ENCODE measurements at regions of chr15 and their contacts with region 1.

Region 1: DNA sequence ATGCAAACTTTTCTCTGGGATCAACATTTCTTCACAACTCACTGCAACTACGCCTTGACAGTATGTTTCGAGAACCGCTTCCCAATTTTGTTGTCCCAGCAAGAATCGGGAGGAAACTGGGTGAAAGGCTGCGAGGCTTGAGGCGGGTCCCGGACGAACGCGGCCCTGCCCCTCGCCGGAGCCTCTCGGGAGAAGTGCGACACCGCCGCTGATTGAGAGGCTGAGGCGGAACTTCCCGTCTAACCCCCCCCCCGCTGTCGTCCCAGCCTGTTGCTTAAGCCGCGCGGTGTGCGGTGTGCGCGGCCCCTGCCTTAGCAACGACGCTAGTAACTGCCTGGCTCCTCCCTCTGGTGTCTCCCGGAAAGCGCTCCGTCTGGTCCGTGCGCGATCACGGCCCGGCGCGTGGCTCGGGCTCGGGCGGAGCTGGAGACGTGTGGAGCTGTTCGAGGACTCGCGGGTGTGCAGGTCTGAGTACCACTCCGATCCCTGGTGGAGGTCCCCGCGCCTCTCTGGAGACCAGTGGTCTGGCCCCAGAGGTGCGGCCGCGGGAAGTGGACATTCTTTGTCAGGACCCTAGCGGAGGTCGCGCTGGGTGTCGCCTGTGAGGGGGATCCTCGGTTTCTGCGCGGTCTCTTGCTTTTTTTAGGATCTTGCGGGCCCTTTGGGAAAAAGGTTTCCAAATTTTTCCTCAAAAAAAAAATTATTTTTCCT is at the starts of genes DTWD1 and FAM227B:
- DNase-seq: peak; percentile 93
- H3K4me3 Mint-ChIP-seq: peak within 1 kb of the TSS; percentile 85
- H3K27ac Mint-ChIP-seq: peak within 1 kb of the TSS; percentile 88
- H3K4me1 Mint-ChIP-seq: peaks cover 40% of the 10 kb centered on the region
- H3K27me3 Mint-ChIP-seq: no peaks in the 10 kb centered on the region
- total RNA-seq, gene DTWD1: 21.1 and 26.5 TPM in 2 replicates
- total RNA-seq, gene FAM227B: 2.3 and 2.9 TPM in 2 replicates

Region 2: DNA sequence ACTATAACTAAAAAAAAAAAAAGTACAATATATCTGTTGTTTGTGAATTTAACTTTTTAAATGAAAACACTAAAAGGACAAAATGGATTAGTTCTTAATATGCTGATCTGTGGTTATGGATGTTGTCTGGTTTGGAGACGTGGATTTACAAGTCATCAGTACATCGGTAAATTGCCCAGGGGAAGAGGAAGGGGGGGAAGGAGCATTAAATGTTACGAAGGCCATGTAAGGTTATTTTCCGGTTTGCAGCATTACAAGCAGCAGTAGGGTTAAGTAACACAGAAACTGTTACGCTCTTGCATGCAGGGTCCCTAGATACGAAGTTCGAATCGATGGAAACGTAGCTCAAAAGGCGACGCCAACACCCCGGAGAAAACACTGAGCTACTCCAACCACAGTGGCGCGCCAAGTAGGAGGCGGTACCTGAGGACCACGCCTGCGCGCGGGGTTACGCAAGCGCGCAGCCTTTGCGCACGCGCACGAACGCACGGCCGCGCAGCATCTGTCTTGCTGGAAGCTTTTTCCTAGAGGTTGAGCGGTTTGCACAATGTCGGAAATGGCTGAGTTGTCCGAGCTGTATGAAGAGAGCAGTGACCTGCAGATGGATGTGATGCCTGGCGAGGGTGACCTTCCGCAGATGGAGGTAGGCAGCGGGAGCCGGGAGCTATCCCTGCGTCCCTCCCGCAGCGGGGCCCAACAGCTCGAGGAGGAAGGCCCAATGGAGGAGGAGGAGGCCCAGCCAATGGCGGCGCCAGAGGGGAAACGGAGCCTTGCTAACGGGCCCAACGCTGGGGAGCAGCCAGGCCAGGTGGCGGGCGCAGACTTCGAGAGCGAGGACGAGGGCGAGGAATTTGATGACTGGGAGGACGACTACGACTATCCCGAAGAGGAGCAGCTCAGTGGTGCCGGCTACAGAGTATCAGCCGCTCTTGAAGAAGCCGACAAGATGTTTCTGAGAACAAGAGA is 742.9 kb before region 1 on chr15 and contains the start of gene EID1:
- intact Hi-C with region 1: loop called (anchors 5 kb)
- DNase-seq: peak; percentile 94
- H3K4me3 Mint-ChIP-seq: peak within 1 kb of the TSS; percentile 99
- H3K27ac Mint-ChIP-seq: peak within 1 kb of the TSS; percentile 97
- H3K4me1 Mint-ChIP-seq: peaks cover 69% of the 10 kb centered on the region
- H3K27me3 Mint-ChIP-seq: no peaks in the 10 kb centered on the region
- total RNA-seq, gene EID1: 177 and 183 TPM in 2 replicates

Region 3: DNA sequence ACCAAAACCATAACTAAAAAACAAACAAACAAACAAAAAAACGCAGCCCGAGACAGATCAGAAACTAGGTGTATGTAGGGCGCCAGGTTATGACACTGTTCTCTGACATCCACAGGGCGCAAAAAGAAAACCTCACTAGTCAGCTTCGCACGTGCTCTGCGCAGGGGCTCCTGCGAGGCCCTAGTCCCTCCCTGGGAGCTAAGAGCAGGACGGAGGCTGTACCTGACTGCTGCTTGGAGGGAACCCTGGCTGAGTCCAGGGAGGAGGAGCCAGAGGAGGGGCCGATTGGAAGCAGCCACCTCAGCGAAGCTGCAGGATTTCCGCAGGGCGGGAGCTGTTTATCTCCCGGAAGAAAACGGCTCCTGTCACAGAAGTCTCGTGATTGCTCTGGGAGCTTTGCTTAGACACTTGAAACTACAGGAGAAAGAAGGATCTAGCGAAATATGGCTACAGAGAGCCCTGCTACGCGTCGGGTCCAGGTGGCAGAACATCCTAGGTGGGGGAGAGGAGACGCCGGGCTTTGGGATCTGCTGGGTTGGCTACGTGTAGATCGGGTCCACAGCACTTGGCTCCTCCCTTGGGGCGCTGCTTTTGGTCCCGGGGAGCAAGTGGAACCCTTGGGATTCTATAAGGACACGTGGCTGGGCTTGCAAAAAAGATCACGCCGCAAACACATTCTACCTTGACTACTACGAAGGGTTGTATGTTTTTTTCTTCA is 450.8 kb before region 1 on chr15 and contains the start of gene GALK2:
- intact Hi-C with region 1: loop called (anchors 5 kb)
- DNase-seq: peak; percentile 82
- H3K4me3 Mint-ChIP-seq: peak within 1 kb of the TSS; percentile 97
- H3K27ac Mint-ChIP-seq: peak within 1 kb of the TSS; percentile 96
- H3K4me1 Mint-ChIP-seq: peaks cover 39% of the 10 kb centered on the region
- H3K27me3 Mint-ChIP-seq: no peaks in the 10 kb centered on the region
- total RNA-seq, gene GALK2: 22.3 and 23.5 TPM in 2 replicates

Region 4: GRCh38 chr15:50051803-50052419 is 431.1 kb after region 1 on chr15:
- intact Hi-C with region 1: loop called (anchors 1 kb)
- DNase-seq: peak; percentile 29
- H3K4me3 Mint-ChIP-seq: no peak overlapping the region
- H3K27ac Mint-ChIP-seq: peak overlapping the region; percentile 44
- H3K4me1 Mint-ChIP-seq: peaks cover 49% of the 10 kb centered on the region
- H3K27me3 Mint-ChIP-seq: no peaks in the 10 kb centered on the region

Region 5: GRCh38 chr15:50260969-50261496 is 640.2 kb after region 1 on chr15:
- intact Hi-C with region 1: loop called (anchors 2 kb)
- DNase-seq: no peak
- H3K4me3 Mint-ChIP-seq: peak overlapping the region; percentile 66
- H3K27ac Mint-ChIP-seq: peak overlapping the region; percentile 98
- H3K4me1 Mint-ChIP-seq: peaks cover 79% of the 10 kb centered on the region
- H3K27me3 Mint-ChIP-seq: no peaks in the 10 kb centered on the region

Region 6: DNA sequence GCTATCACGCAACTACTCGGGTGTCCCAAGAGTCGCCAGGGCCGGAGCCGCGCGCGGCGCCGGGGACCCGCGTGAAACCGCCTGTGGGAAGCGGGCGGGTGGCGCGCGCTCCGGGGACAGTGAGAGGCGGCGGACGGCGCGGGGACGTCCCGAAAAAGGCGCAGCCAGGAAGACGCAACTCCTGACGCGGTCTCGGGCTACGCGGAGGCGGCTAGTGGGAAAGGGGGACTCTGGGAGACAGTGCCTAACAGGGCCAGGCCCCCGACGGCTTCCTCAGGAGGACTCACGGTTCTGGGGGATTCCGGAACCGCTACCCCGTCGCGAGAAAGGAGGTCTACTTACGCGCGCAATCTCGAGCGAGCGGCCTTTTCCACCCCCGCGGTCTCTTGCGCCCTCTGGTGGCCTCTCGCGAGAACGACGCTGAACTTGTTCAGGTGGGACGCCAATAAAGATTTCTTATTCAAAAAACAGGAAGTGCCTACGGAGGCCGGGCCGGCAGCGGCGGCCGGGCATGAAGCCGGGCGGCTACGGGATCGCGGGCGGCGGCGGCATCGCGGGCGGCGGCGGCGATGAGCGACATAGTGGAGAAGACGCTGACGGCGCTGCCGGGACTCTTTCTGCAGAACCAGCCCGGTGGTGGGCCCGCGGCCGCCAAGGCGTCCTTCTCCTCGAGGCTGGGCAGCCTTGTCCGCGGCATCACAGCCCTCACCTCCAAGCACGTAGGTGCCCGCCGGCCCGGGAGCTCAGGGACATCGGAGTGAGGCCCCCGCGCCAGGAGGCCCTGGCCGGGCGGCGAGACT is 1287.6 kb after region 1 on chr15 and contains the start of gene AP4E1:
- intact Hi-C with region 1: loop called (anchors 5 kb)
- DNase-seq: peak; percentile 91
- H3K4me3 Mint-ChIP-seq: peak within 1 kb of the TSS; percentile 96
- H3K27ac Mint-ChIP-seq: peak within 1 kb of the TSS; percentile 98
- H3K4me1 Mint-ChIP-seq: peaks cover 15% of the 10 kb centered on the region
- H3K27me3 Mint-ChIP-seq: peaks cover 2% of the 10 kb centered on the region
- total RNA-seq, gene AP4E1: 15.8 and 17.0 TPM in 2 replicates